Activated CD4-positive, alpha-beta T cell treated with anti-CD3 and anti-CD28 coated beads for 36 hours (primary cell): ENCODE measurements at regions of chr12 and their contacts with region 1.

Region 1: GRCh38 chr12:50132505-50133135 is 20.6 kb downstream of the COX14 start:
- DNase-seq: no peak
- ATAC-seq: peak; percentile 71
- H3K4me3 Mint-ChIP-seq: no peak overlapping the region
- H3K27ac Mint-ChIP-seq: peak overlapping the region; percentile 74
- H3K4me1 Mint-ChIP-seq: peaks cover 6% of the 10 kb centered on the region
- H3K27me3 Mint-ChIP-seq: no peaks in the 10 kb centered on the region

Region 2: DNA sequence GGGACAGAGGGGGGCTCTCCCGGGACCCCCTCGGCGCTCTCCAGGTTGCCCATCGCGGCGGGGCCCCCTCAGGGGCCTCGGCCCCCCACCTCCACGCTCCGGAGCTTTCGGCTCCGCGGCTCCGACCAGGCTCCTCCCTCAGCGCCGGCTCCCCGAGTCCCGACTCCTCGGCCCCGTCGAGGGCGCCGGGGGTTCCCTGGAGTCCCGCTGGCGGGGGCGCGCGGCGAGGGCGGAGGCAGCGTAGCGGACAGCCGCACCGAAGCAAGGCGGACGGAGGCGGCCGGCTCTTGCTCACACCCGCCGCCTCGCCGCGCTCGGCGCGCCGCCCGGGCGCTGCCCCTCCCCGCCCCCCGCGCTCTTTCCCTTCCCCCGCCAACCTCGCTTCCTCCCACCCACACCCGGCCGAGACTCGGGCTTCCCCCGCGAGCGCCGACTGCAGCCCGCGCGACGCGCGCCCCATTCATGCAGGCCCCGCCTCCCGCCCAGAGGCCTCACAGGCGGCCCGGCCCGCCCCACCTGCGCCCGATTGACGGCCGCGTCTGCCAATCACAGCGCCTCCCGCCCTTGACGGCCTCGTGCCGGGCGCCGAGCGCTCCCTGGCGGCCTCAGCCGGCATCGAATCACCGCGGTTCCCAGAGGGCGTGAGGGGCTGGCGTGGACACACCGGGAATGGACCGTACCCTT is 425.4 kb before region 1 on chr12 and contains the start of gene FMNL3:
- CTCF ChIA-PET with region 1: no interaction called
- POLR2A ChIA-PET with region 1: no interaction called
- intact Hi-C with region 1: no loop called
- DNase-seq: peak; percentile 99
- ATAC-seq: peak; percentile 92
- H3K4me3 Mint-ChIP-seq: peak within 1 kb of the TSS; percentile 92
- H3K27ac Mint-ChIP-seq: peak within 1 kb of the TSS; percentile 83
- H3K4me1 Mint-ChIP-seq: peaks cover 43% of the 10 kb centered on the region
- H3K27me3 Mint-ChIP-seq: peaks cover 5% of the 10 kb centered on the region
- total RNA-seq, gene FMNL3: 23.2 to 24.3 TPM

Region 3: GRCh38 chr12:50117057-50117622 is 15.5 kb before region 1 on chr12:
- CTCF ChIA-PET with region 1: interaction called, 23 read pairs
- POLR2A ChIA-PET with region 1: interaction called, 3 read pairs
- intact Hi-C with region 1: no loop called
- DNase-seq: no peak
- ATAC-seq: no peak
- H3K4me3 Mint-ChIP-seq: no peak overlapping the region
- H3K27ac Mint-ChIP-seq: peak overlapping the region; percentile 10
- H3K4me1 Mint-ChIP-seq: peaks cover 27% of the 10 kb centered on the region
- H3K27me3 Mint-ChIP-seq: no peaks in the 10 kb centered on the region

Region 4: DNA sequence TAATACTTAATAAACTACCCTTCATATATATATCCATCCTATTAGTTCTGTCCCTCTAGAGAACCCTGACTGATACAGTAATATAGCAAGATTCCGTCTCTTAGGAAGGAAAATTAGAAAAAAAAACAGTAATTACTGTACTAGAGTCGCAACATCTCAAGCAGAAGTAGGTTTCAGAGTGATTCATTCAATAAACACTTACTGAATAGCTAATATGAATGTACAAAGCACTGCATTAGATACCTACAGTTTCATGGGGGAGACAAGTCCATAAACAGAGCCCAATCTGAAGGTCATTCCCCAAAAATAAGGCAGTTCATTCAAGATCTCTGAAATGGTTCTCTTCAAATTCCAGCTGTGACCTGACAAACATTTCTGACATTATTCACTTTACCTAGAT is 24.6 kb after region 1 on chr12:
- CTCF ChIA-PET with region 1: interaction called, 16 read pairs
- POLR2A ChIA-PET with region 1: no interaction called
- intact Hi-C with region 1: no loop called
- DNase-seq: no peak
- ATAC-seq: peak; percentile 72
- H3K4me3 Mint-ChIP-seq: no peak overlapping the region
- H3K27ac Mint-ChIP-seq: peak overlapping the region; percentile 17
- H3K4me1 Mint-ChIP-seq: peaks cover 32% of the 10 kb centered on the region
- H3K27me3 Mint-ChIP-seq: no peaks in the 10 kb centered on the region